T-cell (primary cell): ENCODE measurements at regions of chr11 and their contacts with region 1.

Region 1: DNA sequence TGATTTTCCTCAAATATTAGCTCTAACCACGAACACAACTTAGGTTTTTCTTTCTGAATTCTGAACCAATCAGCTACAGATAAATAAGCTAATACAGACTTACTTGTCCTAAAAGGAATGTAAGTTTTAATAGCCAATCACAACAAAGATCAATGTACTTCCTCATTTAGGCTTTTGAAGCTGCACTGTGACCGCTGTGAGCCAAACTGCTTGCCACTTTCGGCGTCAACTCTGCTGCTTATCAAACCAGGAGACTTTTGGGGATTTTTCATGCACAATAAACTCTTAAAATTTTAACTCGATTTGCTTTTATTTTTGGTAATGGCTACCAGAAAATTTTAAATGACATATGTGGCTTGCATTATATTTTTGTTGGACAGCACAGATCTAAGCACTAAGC is 92.5 kb downstream of the TMPRSS5 start:
- DNase-seq: no peak
- ATAC-seq: no peak
- H3K4me3 ChIP-seq: no peak overlapping the region
- H3K4me3 Mint-ChIP-seq: no peak overlapping the region
- H3K27ac ChIP-seq: no peak overlapping the region
- H3K27ac Mint-ChIP-seq: no peak overlapping the region
- H3K4me1 ChIP-seq: no peaks in the 10 kb centered on the region
- H3K4me1 Mint-ChIP-seq: no peaks in the 10 kb centered on the region
- H3K27me3 ChIP-seq: peaks cover 0 to 3% of the 10 kb centered on the region in 2 experiments
- H3K27me3 Mint-ChIP-seq: peaks cover 8 to 13% of the 10 kb centered on the region in 2 donors

Region 2: DNA sequence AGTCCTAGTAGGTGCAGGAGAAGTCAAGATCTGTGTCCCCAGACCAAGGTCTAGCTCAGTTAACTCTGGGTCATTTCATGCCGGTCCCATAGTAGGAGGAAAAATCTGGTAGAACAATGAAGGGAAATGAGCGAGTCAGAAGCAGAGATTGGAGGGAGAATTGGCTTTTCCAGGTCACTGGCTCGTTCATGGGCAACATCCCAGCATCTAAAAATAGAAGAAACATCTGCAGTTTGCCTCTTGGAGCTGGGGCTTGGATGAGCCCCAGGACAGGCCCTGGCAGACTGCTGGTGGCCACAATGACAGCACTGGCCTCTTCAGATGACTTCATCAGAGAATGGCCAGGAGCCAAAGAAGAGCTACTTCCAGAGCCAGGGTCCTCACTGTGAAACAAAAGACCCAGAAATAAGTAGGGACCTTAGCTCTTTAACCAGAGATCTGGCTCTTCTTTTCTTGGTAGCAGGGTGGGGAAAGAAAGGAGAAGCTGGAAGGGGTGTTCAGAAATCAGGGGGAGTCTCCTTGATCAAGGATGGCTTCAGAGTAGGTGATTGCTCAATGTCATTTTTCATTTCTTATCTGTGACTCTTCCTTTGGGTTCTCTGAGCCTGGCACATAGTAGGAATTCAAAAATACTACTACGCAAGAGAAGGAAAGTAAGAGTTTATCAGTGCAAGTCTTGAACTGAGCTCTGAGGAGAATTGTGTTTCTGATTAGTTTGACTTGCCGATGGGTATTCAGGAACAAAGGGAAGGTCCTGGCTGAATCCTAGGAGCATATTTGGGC is 10.2 kb before region 1 on chr11:
- CTCF ChIA-PET with region 1: no interaction called
- POLR2A ChIA-PET with region 1: interaction called in 1 of 2 experiments, 10 read pairs
- DNase-seq: no peak
- ATAC-seq: no peak
- H3K4me3 ChIP-seq: no peak overlapping the region
- H3K4me3 Mint-ChIP-seq: no peak overlapping the region
- H3K27ac ChIP-seq: no peak overlapping the region
- H3K27ac Mint-ChIP-seq: no peak overlapping the region
- H3K4me1 ChIP-seq: no peaks in the 10 kb centered on the region
- H3K4me1 Mint-ChIP-seq: no peaks in the 10 kb centered on the region
- H3K27me3 ChIP-seq: peaks cover 0 to 4% of the 10 kb centered on the region in 2 experiments
- H3K27me3 Mint-ChIP-seq: peaks cover 17 to 20% of the 10 kb centered on the region in 2 donors

Region 3: DNA sequence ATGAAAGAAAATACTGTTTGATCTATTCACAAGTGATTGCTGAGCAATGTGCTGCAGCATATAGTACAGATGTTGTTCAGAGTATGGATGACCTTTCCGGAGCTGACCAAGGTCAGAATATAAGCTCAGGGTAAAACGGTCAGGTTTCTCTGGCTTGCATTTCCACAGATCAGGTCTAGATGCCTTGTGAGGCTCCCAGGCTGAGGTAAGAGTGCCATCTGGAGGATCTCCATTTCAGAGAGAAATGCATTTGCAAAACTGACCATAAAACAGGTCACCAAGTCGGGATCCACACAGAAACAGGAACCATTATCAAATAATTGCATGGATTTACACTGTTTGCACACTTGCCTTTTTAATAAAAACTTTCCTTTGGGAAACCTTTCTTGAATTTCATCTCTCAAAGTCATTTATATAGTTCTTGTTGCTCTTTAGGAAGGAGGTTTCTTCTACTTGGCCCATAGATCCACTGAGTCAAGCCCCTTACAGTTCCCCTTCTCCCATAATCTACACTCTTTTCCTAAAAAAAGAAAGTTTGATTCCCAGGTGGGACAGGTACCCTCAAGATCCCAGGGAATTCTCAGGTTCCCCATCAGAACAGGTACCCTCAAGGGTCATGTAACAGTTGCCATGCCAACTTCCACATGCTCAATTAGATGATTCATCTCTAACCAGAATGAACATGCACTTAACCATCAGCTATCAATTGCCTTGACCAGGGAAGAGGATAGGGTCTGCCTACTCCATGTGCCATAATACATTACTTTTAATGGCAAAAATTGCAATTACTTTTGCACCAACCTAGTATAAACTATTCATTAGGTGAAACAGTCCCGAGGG is 117.5 kb after region 1 on chr11:
- CTCF ChIA-PET with region 1: no interaction called
- POLR2A ChIA-PET with region 1: no interaction called
- DNase-seq: no peak
- ATAC-seq: no peak
- H3K4me3 ChIP-seq: no peak overlapping the region
- H3K4me3 Mint-ChIP-seq: no peak overlapping the region
- H3K27ac ChIP-seq: no peak overlapping the region
- H3K27ac Mint-ChIP-seq: no peak overlapping the region
- H3K4me1 ChIP-seq: no peaks in the 10 kb centered on the region
- H3K4me1 Mint-ChIP-seq: no peaks in the 10 kb centered on the region
- H3K27me3 ChIP-seq: no peaks in the 10 kb centered on the region
- H3K27me3 Mint-ChIP-seq: no peaks in the 10 kb centered on the region